ENCODE measurements at regions of chr17 and their contacts with region 1.

Region 1: GRCh38 chr17:39980351-39981206 is at the start of gene PSMD3:
- DNase-seq: peak; percentile 97
- H3K4me3 ChIP-seq: peak within 1 kb of the TSS; percentile 96
- CTCF ChIP-seq: peak; percentile 64

Region 2: DNA sequence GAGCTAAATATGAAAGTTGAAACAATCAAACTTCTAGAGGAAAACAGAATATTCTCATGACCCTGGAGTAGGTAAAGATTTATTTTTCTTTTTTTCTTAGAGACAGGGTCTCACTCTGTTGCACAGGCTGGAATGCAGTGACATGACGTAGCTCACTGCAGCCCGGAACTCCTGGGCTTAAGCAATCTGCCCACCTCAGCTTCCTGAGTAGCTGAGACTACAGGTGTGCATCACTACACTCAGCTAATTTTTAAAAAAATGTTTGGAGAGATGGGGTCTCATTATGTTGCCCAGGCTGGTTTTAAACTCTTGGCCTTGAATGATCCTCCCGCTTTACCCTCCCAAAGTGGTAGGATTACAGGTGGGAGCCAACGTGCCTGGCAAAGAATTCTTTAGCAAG is 132.0 kb before region 1 on chr17:
- CTCF ChIA-PET with region 1: no interaction called
- POLR2A ChIA-PET with region 1: no interaction called
- DNase-seq: no peak
- H3K4me3 ChIP-seq: no peak overlapping the region
- CTCF ChIP-seq: no peak

Region 3: DNA sequence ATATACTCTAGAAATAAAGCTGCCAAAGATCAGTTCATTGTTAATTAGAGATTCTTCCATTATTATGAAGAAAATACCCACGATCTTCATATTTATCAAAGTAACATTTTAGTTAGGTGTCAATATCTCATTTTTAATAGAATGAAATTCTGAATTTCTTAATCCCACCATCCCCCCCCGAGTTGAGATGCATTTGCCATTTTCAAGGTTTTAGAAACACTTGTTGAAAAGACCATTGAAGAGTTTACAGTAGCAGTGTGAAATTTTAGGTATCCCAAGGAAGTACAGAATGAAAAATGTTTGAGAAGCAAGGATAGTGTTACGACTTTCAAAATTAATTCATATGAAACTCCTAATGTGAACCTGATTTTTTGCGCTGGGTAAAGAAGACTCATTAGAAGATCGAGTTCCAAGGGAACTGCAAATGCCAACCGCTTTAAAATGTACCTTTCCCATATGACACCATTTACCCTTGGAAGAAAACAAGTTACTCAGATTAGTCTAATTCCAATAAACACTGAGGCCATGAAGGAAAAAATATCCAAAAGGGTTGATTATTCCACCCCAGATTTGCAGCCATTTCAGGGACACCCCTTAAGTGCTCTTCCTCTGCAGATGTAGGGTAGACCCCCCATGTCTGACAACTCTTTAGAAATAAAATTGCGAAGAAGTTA is 117.2 kb before region 1 on chr17:
- CTCF ChIA-PET with region 1: interaction called, 13 read pairs
- POLR2A ChIA-PET with region 1: no interaction called
- DNase-seq: no peak
- H3K4me3 ChIP-seq: no peak overlapping the region
- CTCF ChIP-seq: no peak

Region 4: DNA sequence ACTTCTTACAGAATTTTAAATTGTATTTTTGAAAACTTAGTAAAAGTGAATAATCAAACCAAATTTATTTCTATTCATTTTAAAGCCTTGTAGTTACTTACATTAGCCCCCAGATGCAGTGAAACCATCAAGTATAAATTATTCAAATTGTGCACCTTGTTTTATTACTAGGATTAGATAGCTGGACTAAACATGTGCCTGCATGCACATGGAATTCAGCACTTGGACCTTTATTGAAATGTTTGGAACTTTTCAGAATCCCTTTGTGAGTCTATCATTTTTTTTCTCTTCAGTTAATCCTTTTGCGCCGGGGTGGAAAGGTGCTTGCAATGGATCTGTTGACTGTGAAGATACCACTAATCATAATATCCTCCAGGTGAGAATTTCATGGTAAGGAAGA is 107.8 kb before region 1 on chr17:
- CTCF ChIA-PET with region 1: interaction called, 109 read pairs
- POLR2A ChIA-PET with region 1: no interaction called
- DNase-seq: peak; percentile 5
- H3K4me3 ChIP-seq: no peak overlapping the region
- CTCF ChIP-seq: no peak

Region 5: GRCh38 chr17:39927101-39927928 is 53.3 kb before region 1 on chr17 and contains the starts of genes LRRC3C and ORMDL3:
- CTCF ChIA-PET with region 1: interaction called, 11 read pairs
- POLR2A ChIA-PET with region 1: interaction called, 4 read pairs
- DNase-seq: peak; percentile 41
- H3K4me3 ChIP-seq: peak within 1 kb of the TSS; percentile 82
- CTCF ChIP-seq: no peak

Region 6: DNA sequence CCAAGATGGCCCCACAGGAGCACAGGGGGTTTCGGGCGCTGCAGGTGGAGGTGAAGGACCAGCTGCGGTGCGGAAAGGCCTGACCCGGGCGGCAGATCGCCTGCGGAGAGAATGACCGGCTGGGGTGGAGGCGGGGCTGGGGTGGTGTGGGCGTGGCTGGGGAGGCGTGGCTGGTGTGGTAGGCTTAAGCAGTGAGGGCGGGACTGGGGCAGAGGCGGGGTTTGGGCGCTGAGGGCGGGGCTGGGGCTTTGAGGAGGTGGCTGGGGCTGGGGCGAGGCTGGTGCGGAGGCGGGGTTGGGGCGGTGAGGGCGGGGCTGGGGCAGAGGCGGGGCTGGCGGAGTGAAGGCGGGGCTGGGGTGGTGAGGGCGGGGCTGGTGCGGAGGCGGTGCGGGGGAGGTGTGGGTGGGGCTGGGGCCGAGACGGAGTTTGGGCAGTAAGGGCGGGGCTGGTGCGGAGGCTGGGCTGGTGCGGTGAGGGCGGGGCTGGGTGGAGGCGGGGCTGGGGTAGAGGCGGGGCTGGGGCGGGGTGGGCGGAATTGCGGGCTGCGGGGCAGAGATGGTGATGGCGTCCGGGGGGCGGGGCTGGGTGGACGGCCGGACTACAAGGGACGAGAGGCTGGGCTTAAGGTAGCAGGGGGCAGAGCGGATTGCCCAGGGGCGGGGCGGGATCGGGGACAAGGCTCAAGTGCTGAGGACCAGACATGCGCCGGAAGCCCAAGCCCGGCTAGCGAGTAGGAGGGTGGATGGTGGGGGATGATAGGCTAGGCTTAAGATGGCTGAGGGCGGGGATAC is 27.7 kb before region 1 on chr17:
- CTCF ChIA-PET with region 1: interaction called, 450 read pairs
- POLR2A ChIA-PET with region 1: no interaction called
- DNase-seq: peak; percentile 36
- H3K4me3 ChIP-seq: peak overlapping the region; percentile 54
- CTCF ChIP-seq: no peak